ENCODE measurements at regions of chr15 and their contacts with region 1.

Region 1: GRCh38 chr15:77024271-77025082 is 29.6 kb downstream of the PSTPIP1 start:
- DNase-seq: peak; percentile 81
- ATAC-seq: no peak
- H3K4me3 Mint-ChIP-seq: no peak overlapping the region
- H3K27ac Mint-ChIP-seq: peak overlapping the region; percentile 100
- H3K4me1 Mint-ChIP-seq: peaks cover 58% of the 10 kb centered on the region
- H3K27me3 Mint-ChIP-seq: no peaks in the 10 kb centered on the region
- CTCF ChIP-seq: peak; percentile 99

Region 2: DNA sequence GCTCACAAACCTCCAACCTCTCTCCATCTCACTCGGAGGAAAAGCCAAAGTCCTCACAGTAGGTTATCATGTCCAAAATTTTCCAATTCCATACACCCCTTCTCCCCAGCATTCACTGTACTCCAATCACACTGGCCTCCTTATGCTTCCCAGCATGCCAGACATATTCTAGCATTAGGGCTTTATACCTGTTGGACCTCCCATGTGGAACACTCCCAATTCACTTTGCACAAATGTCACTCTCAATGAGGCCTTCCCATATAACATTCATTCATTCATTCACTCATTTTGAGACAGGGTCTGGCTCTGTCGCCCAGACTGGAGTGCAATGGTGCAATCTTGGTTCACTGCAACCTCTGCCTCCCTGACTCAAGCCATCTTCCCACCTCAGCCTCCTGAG is 139.3 kb before region 1 on chr15:
- CTCF ChIA-PET with region 1: no interaction called
- POLR2A ChIA-PET with region 1: no interaction called
- intact Hi-C with region 1: no loop called
- DNase-seq: no peak
- ATAC-seq: no peak
- H3K4me3 Mint-ChIP-seq: no peak overlapping the region
- H3K27ac Mint-ChIP-seq: no peak overlapping the region
- H3K4me1 Mint-ChIP-seq: peaks cover 22% of the 10 kb centered on the region
- H3K27me3 Mint-ChIP-seq: no peaks in the 10 kb centered on the region
- CTCF ChIP-seq: no peak

Region 3: GRCh38 chr15:76987926-76988860 is 36.3 kb before region 1 on chr15:
- CTCF ChIA-PET with region 1: interaction called, 30 read pairs
- POLR2A ChIA-PET with region 1: interaction called, 62 read pairs
- intact Hi-C with region 1: loop called (anchors 5 kb)
- DNase-seq: peak; percentile 91
- ATAC-seq: peak; percentile 89
- H3K4me3 Mint-ChIP-seq: peak overlapping the region; percentile 59
- H3K27ac Mint-ChIP-seq: peak overlapping the region; percentile 100
- H3K4me1 Mint-ChIP-seq: peaks cover 49% of the 10 kb centered on the region
- H3K27me3 Mint-ChIP-seq: no peaks in the 10 kb centered on the region
- CTCF ChIP-seq: no peak

Region 4: GRCh38 chr15:77002954-77003912 is 21.2 kb before region 1 on chr15:
- CTCF ChIA-PET with region 1: interaction called, 13 read pairs
- POLR2A ChIA-PET with region 1: interaction called, 62 read pairs
- intact Hi-C with region 1: no loop called
- DNase-seq: peak; percentile 91
- ATAC-seq: peak; percentile 81
- H3K4me3 Mint-ChIP-seq: peak overlapping the region; percentile 59
- H3K27ac Mint-ChIP-seq: peak overlapping the region; percentile 93
- H3K4me1 Mint-ChIP-seq: peaks cover 85% of the 10 kb centered on the region
- H3K27me3 Mint-ChIP-seq: no peaks in the 10 kb centered on the region
- CTCF ChIP-seq: no peak

Region 5: GRCh38 chr15:77034695-77035489 is 10.4 kb after region 1 on chr15:
- CTCF ChIA-PET with region 1: interaction called, 51 read pairs
- POLR2A ChIA-PET with region 1: interaction called, 13 read pairs
- intact Hi-C with region 1: no loop called
- DNase-seq: peak; percentile 66
- ATAC-seq: peak; percentile 41
- H3K4me3 Mint-ChIP-seq: no peak overlapping the region
- H3K27ac Mint-ChIP-seq: peak overlapping the region; percentile 20
- H3K4me1 Mint-ChIP-seq: peaks cover 11% of the 10 kb centered on the region
- H3K27me3 Mint-ChIP-seq: no peaks in the 10 kb centered on the region
- CTCF ChIP-seq: peak; percentile 66

Region 6: GRCh38 chr15:77059786-77060361 is 35.4 kb after region 1 on chr15:
- CTCF ChIA-PET with region 1: interaction called, 15 read pairs
- POLR2A ChIA-PET with region 1: interaction called, 4 read pairs
- intact Hi-C with region 1: no loop called
- DNase-seq: peak; percentile 53
- ATAC-seq: peak; percentile 80
- H3K4me3 Mint-ChIP-seq: peak overlapping the region; percentile 8
- H3K27ac Mint-ChIP-seq: peak overlapping the region; percentile 10
- H3K4me1 Mint-ChIP-seq: peaks cover 52% of the 10 kb centered on the region
- H3K27me3 Mint-ChIP-seq: no peaks in the 10 kb centered on the region
- CTCF ChIP-seq: no peak

Region 7: DNA sequence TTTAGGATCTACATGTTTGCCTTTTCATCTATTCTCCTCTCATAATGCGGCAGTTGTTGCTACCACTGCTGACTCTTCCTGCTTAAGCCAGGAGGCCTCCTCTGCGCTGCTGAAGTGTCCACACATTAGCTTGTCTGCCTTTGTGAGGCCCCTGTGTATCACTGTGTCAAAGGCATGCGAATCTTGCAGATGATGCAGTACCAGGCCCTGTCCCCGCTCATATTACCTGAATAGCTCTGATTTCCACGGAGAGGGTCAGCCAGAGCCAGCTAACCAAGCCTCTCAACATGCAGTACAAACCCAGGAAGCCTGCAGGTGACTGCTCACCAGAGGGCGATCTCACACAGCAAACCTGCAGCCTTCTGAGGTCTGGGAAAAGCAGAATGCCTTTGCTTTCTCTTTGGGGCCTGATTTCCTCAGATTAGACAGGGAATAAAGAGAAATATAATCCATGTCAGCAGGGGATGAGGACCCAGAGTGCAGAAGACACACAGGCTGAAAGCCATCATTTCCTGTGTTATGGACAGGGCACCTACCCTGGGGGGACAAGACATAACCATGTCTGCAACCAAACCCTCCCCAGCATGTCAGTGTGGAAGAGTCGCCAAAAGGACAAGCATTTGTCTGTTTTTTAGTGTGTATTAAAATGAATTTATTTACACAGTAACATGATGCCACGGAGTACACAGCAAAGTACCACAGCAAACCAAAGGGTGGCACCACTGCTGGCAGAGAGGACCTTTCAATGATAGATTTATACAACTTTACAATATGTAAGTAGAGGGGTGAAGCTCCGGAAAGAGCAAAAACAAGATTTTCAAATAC is 83.3 kb after region 1 on chr15:
- CTCF ChIA-PET with region 1: no interaction called
- POLR2A ChIA-PET with region 1: no interaction called
- intact Hi-C with region 1: no loop called
- DNase-seq: peak; percentile 65
- ATAC-seq: peak; percentile 65
- H3K4me3 Mint-ChIP-seq: no peak overlapping the region
- H3K27ac Mint-ChIP-seq: no peak overlapping the region
- H3K4me1 Mint-ChIP-seq: no peaks in the 10 kb centered on the region
- H3K27me3 Mint-ChIP-seq: no peaks in the 10 kb centered on the region
- CTCF ChIP-seq: peak; percentile 65

Region 8: GRCh38 chr15:77295446-77295845 is 271.0 kb after region 1 on chr15:
- CTCF ChIA-PET with region 1: no interaction called
- POLR2A ChIA-PET with region 1: no interaction called
- intact Hi-C with region 1: no loop called
- DNase-seq: no peak
- ATAC-seq: no peak
- H3K4me3 Mint-ChIP-seq: no peak overlapping the region
- H3K27ac Mint-ChIP-seq: no peak overlapping the region
- H3K4me1 Mint-ChIP-seq: no peaks in the 10 kb centered on the region
- H3K27me3 Mint-ChIP-seq: no peaks in the 10 kb centered on the region
- CTCF ChIP-seq: no peak